ENCODE measurements at regions of chr10 and their contacts with region 1.

Region 1: DNA sequence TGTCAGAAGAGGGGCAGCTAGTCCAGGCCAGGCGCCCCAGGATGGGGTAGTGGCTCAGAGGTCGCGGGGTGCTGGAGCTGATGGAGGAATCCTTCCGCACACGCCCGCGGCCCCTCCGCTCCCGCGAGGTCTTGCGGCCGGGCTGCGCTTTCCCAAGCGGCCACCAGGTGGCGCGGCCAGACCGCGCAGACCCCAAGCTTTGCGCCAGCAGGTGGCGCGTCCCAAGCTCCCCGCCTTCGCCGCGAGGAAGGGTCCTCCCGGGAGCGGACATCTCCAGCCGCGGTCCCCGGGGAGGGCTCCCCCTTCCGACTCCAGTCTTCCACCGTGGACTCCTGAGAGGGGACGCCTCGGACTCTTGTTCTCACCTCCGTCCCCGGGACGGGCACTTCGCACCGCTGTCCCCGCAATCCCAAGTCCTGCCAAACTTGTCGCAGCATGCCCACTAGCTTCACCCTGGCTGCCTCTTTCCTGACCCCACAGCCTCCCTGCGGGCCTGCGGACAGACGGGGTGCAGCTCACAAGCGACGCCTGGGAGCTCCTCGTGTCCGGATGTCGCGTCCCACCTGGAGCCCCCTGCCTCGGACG is 19.4 kb downstream of the KCNK18 start:
- DNase-seq: no peak
- H3K4me3 ChIP-seq: peak overlapping the region; percentile 30 to 62 (median 51)
- H3K27ac ChIP-seq: no peak overlapping the region
- H3K4me1 ChIP-seq: peaks cover 10 to 26% (median 13%) of the 10 kb centered on the region in 3 donors
- H3K27me3 ChIP-seq: peaks cover 0 to 91% (median 9%) of the 10 kb centered on the region in 4 donors
- CTCF ChIP-seq: peak; percentile 98 to 100 (median 99)
- POLR2A ChIP-seq: no peak

Region 2: DNA sequence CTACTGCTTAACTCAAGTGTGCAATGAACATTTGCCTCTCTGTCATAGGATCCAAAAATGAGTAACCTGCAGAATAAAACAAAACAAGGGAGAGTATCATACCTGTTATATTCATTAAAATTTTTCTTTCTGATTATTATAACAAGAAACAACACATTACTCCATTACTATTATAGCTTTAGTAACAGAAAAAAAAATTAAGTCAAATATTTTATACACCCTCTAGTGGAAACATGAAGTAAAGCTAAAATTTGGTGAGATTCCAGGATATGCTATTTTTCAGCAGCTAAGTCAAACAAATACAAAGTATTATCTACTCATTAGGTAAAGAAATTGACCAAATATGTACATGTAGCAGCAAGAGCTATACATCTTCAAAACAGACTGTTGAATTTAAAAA is 102.2 kb after region 1 on chr10:
- intact Hi-C with region 1: loop called (anchors 10 kb)
- DNase-seq: no peak
- H3K4me3 ChIP-seq: no peak overlapping the region
- H3K27ac ChIP-seq: no peak overlapping the region
- H3K4me1 ChIP-seq: no peaks in the 10 kb centered on the region
- H3K27me3 ChIP-seq: no peaks in the 10 kb centered on the region
- CTCF ChIP-seq: peak in 3 of 6 experiments; percentile 14 to 36 (median 27)
- POLR2A ChIP-seq: no peak

Region 3: DNA sequence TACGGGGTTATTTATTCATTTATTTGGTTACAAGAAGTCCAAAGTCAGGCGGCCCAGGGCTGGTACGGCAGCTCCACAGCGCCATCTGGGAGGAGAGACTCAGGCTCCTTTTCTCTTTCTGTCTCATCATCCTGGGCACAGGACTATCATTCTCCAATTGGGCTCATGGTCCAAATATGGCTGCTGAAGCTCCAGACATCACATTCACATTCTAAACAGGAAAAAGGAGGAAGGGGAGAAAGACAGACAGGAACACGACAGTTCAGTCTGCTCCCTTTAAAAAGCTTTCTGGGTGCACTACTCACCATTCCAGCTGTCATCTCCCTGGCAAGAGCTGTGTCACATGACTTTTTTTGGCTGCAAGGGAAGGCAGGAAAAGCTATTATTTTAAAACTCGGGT is 232.9 kb after region 1 on chr10:
- intact Hi-C with region 1: loop called (anchors 10 kb)
- DNase-seq: no peak
- H3K4me3 ChIP-seq: no peak overlapping the region
- H3K27ac ChIP-seq: no peak overlapping the region
- H3K4me1 ChIP-seq: no peaks in the 10 kb centered on the region
- H3K27me3 ChIP-seq: peaks cover 0 to 16% (median 0%) of the 10 kb centered on the region in 4 donors
- CTCF ChIP-seq: peak in 1 of 6 experiments; percentile 38
- POLR2A ChIP-seq: no peak